Heart right ventricle (tissue), 16 donors: ENCODE measurements at regions of chr15 and their contacts with region 1.

Region 1: DNA sequence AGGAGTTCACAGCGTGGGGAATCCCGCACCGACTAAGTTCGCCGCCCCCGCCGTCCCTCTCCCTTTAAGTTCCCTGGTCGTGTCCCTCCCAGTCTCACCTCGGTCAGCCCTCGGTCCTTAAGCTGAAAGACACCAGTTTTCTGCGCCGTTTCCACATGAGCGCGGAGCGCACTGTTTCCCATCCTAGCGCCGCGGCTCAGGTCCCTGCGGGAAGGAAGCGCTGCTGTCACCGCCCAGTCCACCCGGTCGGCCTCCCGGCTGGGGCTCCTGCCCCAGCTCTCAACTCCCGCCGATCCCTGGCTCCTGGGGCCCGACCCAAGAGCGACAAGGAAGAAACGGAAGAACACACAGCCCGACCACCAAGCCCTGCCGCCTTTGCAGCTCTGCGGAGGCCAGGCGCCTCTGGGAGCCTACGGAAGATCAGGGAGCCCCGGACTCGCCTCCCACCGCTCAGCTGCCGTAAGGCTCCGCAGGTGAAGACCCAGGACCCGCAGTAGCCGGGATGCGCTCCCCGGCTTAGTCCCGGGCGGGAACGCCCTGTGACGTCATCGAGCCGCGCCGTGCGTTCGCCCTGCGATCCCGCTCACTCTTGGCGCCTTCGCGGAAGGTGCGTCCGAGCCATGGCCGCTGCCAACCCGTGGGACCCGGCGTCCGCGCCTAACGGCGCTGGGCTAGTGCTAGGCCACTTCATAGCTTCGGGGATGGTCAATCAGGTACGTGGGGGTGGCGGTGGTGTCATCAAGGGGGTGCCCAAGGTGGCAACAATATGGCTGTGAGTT is at the starts of genes HAUS2 and LRRC57:
- DNase-seq: peak; percentile 86 to 92
- ATAC-seq: peak; percentile 95 to 98 (median 97)
- H3K4me3 ChIP-seq: peak within 1 kb of the TSS; percentile 75 to 99 (median 96)
- H3K27ac ChIP-seq: peak within 1 kb of the TSS; percentile 71 to 97 (median 92)
- H3K4me1 ChIP-seq: peaks cover 3 to 58% (median 26%) of the 10 kb centered on the region in 9 donors
- H3K27me3 ChIP-seq: no peaks in the 10 kb centered on the region
- CTCF ChIP-seq: no peak
- total RNA-seq, gene HAUS2: 8.5 to 17.0 (median 11.9) TPM
- total RNA-seq, gene LRRC57: 12.1 to 24.6 (median 16.6) TPM

Region 2: DNA sequence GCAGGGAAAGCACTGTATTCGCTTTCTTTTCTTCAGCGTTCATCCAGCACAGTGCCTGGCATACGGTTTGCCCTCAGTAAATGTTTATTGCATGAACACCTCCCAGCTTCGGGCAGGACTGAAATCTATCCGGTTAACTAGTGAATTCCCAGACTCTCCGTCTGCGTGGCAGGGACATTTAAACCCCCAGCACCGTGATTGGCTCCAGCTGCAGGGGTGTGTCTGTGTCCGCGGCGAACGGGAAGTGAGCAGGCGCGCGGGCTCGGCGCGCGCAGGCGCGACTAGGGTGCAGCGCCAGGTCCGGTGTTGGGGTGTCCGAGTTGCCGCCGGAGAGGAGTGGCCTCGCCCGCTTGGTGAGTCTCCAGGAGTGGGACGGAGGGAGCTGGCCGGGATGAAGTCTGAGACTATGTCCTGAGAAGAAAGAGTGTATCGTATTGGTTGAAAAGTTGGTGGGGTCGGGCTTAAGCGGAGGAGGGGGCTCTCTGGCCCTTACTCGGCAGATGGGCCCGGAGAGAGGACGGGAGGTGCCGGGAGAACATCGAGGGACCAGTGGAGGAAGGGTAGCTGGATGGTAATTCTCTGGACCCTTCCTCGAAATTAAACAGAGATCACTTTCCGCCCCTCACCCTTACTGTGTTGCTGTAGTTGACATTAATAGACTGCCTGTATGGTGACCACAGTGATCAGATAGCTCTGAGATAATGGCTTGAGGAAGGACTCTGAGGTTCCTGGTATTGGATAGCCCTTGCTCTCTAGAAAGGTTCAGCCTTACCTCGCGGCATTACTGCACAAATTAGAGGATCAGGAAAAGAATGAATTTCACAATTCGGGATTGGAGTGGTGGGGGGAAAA is 52.9 kb before region 1 on chr15 and contains the start of gene SNAP23:
- intact Hi-C with region 1: loop called in 1 of 10 experiments (anchors 5 kb)
- DNase-seq: peak; percentile 93
- ATAC-seq: peak; percentile 95 to 97 (median 96)
- H3K4me3 ChIP-seq: peak within 1 kb of the TSS; percentile 34 to 95 (median 68)
- H3K27ac ChIP-seq: peak within 1 kb of the TSS; percentile 83 to 93 (median 90)
- H3K4me1 ChIP-seq: peaks cover 8 to 81% (median 58%) of the 10 kb centered on the region in 9 donors
- H3K27me3 ChIP-seq: no peaks in the 10 kb centered on the region
- CTCF ChIP-seq: no peak
- total RNA-seq, gene SNAP23: 26.7 to 64.8 (median 46.6) TPM

Region 3: GRCh38 chr15:42650208-42651066 is 102.0 kb after region 1 on chr15:
- intact Hi-C with region 1: loop called in 9 of 10 experiments (anchors 2 to 10 kb)
- DNase-seq: peak in 1 of 2 donors; percentile 71
- ATAC-seq: peak; percentile 85 to 97 (median 95)
- H3K4me3 ChIP-seq: no peak overlapping the region
- H3K27ac ChIP-seq: no peak overlapping the region
- H3K4me1 ChIP-seq: peaks cover 0 to 17% (median 3%) of the 10 kb centered on the region in 9 donors
- H3K27me3 ChIP-seq: no peaks in the 10 kb centered on the region
- CTCF ChIP-seq: peak; percentile 53 to 92 (median 82)